OCI-LY7 (cell line): ENCODE measurements at regions of chr3 and their contacts with region 1.

Region 1: DNA sequence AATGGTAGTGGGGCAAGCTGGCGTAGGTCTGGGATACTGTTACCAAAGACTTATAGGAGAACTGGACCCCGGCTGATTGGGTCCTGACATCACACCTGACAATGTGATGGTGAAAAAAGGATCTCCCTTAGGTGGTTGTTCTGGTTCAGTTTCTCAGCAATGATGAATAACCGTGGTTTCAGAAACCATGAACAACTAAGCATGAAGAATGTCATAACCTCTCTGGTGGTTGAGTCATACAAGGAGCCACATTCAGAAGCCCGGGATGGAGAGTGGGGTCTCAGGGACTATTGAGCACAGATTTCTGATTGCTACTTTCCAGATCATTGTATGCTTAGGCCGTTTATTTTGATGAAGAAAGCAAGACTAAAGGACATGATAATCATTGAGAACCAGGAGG is 17.4 kb downstream of the GPR160 start:
- DNase-seq: peak; percentile 47
- H3K4me3 ChIP-seq: peak overlapping the region; percentile 66
- H3K27ac ChIP-seq: peak overlapping the region; percentile 98
- H3K4me1 ChIP-seq: peaks cover 75% of the 10 kb centered on the region
- CTCF ChIP-seq: no peak

Region 2: GRCh38 chr3:169772897-169773828 is 282.0 kb before region 1 on chr3 and contains the start of gene MYNN:
- CTCF ChIA-PET with region 1: no interaction called
- POLR2A ChIA-PET with region 1: interaction called, 7 read pairs
- intact Hi-C with region 1: loop called (anchors 2 kb)
- DNase-seq: peak; percentile 93
- H3K4me3 ChIP-seq: peak within 1 kb of the TSS; percentile 84
- H3K27ac ChIP-seq: peak within 1 kb of the TSS; percentile 92
- H3K4me1 ChIP-seq: peaks cover 31% of the 10 kb centered on the region
- CTCF ChIP-seq: peak; percentile 50
- total RNA-seq, gene MYNN: 12.0 and 13.1 TPM in 2 replicates

Region 3: GRCh38 chr3:169871129-169871886 is 183.9 kb before region 1 on chr3:
- CTCF ChIA-PET with region 1: no interaction called
- POLR2A ChIA-PET with region 1: no interaction called
- intact Hi-C with region 1: no loop called
- DNase-seq: peak; percentile 31
- H3K4me3 ChIP-seq: no peak overlapping the region
- H3K27ac ChIP-seq: no peak overlapping the region
- H3K4me1 ChIP-seq: peaks cover 20% of the 10 kb centered on the region
- CTCF ChIP-seq: no peak

Region 4: DNA sequence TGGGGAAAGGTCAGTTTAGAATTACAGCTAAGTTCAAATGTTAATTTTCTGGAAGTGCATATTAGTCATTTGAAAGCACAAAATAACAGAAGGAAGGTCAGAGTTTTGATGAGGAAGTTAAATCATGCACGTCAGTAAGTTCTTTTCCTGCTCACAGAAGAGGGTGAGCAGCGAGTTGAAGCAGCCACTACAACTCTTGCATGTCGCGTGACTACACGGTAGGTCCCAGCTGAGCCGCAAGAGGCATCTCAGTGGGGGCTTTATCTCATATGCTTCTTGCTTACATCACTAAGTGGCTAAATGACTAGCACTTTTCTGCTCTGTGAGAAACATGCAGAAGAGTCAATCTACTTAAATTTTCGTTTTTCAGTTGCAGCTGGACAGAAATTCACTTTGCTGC is 109.9 kb before region 1 on chr3:
- CTCF ChIA-PET with region 1: no interaction called
- POLR2A ChIA-PET with region 1: interaction called, 17 read pairs
- intact Hi-C with region 1: loop called (anchors 1 kb)
- DNase-seq: peak; percentile 93
- H3K4me3 ChIP-seq: peak overlapping the region; percentile 55
- H3K27ac ChIP-seq: peak overlapping the region; percentile 99
- H3K4me1 ChIP-seq: peaks cover 98% of the 10 kb centered on the region
- CTCF ChIP-seq: 0 out of 2 replicates have a peak, but pooled peaks have one; percentile 35

Region 5: DNA sequence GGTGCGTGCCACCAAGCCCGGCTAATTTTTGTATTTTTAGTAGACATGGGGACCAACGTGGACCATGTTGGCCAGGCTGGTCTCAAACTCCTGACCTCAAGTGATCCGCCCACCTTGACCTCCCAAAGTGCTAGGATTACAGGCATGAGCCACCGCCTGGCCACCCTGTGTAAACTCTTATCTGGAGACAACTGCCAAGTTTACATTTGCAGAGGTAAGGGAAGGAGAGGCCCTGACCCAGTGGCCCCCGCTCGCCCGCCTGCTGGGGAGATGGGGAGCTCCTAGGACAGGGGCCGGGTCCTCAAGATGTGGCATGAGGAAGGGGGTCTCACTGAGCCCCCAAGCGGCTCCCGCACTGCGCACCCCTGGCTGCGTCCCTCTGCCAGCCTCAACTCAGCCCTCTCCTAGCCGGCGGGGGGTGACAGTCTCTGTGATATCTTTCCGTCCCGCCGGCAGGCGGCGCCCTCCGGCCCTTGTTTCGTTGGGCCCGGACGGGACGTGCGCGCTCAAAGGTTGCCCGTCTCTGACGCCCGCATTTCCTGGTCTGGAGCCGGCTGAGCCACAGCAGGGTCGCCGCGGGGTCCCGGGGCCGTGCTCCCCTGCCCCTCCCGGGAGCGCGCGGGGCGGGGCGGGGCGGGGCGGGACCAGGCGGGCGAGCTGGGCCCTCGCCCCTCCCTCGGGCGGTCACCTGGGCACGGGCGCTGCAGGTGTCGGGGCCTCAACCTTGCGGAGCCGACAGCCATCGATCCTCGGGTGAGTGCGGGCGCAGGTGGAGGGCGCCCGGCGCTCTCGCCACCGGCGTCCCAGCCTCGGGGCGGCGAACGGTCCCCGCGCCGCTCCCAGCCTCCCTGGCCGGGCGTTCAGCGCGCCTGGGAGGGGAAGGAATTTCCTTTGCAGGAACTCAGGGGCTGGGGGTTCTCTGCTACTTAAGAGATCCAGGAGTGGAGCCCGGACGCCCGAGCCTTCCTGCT is 17.5 kb before region 1 on chr3 and contains the start of gene GPR160:
- CTCF ChIA-PET with region 1: interaction called, 6 read pairs
- POLR2A ChIA-PET with region 1: interaction called, 143 read pairs
- intact Hi-C with region 1: loop called (anchors 1 kb)
- DNase-seq: peak; percentile 95
- H3K4me3 ChIP-seq: peak within 1 kb of the TSS; percentile 94
- H3K27ac ChIP-seq: peak within 1 kb of the TSS; percentile 64
- H3K4me1 ChIP-seq: peaks cover 40% of the 10 kb centered on the region
- CTCF ChIP-seq: peak; percentile 81
- total RNA-seq, gene GPR160: 90.5 and 108 TPM in 2 replicates

Region 6: DNA sequence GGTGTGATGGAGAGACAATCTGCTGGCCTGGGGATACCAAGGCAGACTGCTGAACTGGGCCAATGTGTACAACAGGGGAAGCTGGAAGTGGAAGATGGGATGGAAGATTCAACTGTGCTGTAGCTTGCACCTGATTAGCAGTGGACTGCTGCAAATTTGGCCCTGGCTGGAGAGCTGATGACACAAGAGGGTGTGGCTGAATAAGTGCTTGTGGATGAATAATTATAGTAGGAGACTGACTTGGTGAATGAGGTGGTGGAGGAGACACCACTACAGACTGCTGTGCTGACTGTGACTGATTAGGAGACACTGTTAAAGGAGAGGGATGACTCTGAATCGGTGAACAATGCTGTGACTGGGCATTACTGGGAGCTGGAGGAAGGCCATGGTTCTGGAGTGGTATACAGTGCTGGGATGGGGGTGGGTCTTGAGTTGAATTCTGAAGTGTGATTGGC is 73.8 kb after region 1 on chr3:
- CTCF ChIA-PET with region 1: interaction called, 4 read pairs
- POLR2A ChIA-PET with region 1: interaction called, 5 read pairs
- intact Hi-C with region 1: loop called (anchors 2 kb)
- DNase-seq: peak; percentile 58
- H3K4me3 ChIP-seq: peak overlapping the region; percentile 61
- H3K27ac ChIP-seq: peak overlapping the region; percentile 96
- H3K4me1 ChIP-seq: peaks cover 94% of the 10 kb centered on the region
- CTCF ChIP-seq: 0 out of 2 replicates have a peak, but pooled peaks have one; percentile 2

Region 7: DNA sequence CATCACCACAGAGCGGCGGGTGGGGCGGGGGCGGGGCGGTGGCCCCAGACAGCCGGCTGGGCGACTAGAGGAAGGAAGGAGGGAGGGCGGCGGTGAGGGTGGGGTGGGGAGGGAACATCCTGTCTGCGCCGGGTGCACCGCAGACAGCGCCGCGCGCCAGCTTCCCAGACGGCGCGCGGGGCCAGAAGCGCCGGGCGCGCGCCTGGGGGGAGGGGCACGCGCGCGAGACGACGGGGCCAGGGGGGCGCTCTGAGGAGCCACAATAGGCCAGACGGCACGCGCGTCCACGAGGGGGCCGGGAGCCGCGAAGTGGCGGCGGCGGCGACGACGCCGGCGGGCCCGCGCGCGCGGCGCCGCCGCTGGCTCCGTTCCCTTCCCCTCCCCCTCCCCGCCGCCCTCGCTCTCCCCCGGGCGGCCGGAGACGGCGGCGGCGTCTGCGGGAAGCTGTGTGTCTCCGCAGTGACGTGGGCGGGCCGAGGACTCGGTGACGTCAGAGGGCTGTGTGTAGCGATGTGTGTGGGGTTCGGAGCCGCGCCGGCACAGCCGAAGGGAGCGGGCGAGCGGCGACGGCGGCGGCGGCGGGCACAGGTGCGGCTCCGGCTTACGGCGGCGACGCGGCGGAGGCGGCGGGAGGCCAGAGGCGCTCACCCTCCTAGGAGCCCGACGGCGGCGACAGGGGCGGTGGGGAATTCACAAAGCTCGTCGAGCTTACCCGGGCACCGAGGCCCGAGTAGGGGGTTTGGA is 302.1 kb after region 1 on chr3 and contains the start of gene SKIL:
- CTCF ChIA-PET with region 1: no interaction called
- POLR2A ChIA-PET with region 1: interaction called, 4 read pairs
- intact Hi-C with region 1: loop called (anchors 1 kb)
- DNase-seq: peak; percentile 97
- H3K4me3 ChIP-seq: peak within 1 kb of the TSS; percentile 97
- H3K27ac ChIP-seq: peak within 1 kb of the TSS; percentile 94
- H3K4me1 ChIP-seq: peaks cover 54% of the 10 kb centered on the region
- CTCF ChIP-seq: no peak
- total RNA-seq, gene SKIL: 60.9 and 82.6 TPM in 2 replicates